ENCODE measurements at regions of chr9 and their contacts with region 1.

Region 1: GRCh38 chr9:14768405-14769229 is 46.1 kb upstream of the CER1 start:
- DNase-seq: no peak
- ATAC-seq: peak; percentile 51

Region 2: GRCh38 chr9:14466429-14466818 is 302.2 kb before region 1 on chr9:
- intact Hi-C with region 1: loop called in 1 of 2 experiments (anchors 10 kb)
- DNase-seq: no peak
- ATAC-seq: no peak

Region 3: DNA sequence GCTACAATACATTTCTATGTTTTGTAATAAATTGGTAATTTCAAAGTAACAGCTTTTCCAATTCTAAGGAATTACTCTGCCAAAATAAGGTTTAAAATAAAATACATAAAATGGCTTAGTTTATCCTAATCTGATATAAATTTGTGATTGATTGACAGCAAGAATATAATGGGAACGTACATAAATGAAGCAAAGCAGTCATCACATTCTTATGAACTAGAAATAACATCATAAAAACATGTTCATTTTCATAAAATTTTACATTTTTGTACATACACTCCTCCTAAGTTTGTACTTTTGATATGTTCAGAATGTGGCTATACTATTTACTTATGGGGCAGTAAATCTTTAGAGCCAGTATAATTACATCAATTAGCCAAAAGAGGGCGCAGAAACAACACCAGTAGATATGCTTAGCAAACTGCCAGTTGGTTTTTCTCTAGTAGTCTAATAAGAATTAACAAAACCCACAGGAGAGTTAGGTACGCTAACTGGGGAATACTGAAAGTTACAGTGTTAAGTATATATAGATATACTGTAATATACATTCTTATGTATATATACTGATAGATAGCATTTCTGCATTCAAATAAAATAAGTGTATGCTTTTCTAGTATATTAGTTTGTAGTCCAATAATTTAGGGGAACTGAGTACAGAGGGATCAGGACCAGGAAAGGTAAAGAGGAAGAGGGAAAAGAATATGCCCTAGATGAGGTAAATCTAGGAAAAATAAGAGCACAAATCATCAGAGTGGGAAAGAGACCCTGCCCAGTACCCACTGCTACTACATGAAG is 152.2 kb before region 1 on chr9:
- intact Hi-C with region 1: loop called in 1 of 2 experiments (anchors 5 kb)
- DNase-seq: no peak
- ATAC-seq: peak; percentile 89

Region 4: DNA sequence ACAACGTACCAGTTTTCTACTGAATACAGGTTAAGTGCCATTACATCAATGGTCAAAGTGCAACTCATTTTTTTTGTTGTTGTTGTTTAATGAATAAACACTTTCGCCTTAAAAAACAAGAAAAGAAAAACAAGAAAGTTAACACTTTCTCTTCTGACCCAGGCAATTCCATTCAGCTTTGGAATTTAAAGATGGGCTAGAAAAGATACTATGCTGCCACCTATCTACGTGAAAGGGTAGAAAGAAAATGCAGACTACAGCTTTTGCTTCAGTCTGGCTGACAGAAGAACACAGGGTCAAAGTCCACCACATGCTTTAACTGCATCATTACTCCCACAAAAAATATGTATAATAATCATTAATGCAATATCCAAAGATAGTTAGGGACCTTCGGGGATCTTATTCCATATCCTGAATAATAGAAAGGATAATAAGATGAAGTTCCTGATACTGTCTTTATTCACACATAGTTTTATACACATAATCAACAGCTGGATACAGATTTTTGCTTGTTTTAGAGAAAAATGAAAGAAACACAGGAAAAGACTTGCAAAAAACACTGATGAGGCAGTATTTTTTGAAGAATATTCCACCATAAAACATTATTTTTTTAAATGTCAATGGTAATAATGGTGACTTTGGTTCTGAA is 115.8 kb before region 1 on chr9:
- intact Hi-C with region 1: no loop called
- DNase-seq: no peak
- ATAC-seq: peak; percentile 90

Region 5: DNA sequence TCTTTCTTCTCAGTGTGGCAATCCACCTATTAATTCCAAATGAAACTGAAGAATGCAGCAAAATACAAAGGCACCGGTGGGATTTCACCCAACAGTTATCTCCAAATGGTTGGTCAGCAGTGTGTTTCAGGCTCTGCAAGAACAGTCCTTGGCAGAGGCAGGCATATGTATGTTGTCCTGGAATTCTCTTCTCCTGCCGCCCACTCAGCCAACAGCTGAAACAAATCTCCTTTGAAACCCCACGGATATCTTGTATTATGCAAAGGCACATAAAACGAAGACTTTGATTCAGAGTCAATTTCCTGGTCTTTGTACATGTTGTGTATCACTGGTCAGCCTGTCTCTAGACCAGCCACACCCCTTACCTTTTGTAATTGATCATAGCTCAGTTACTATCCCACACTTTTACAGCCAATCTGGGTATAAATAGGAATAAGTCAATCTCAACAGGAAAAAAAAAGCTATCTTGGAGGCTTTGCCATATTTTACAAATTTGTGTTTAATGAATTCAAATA is 112.4 kb after region 1 on chr9:
- intact Hi-C with region 1: no loop called
- DNase-seq: peak in 1 of 2 donors; percentile 6
- ATAC-seq: peak; percentile 91

Measured in left colon (tissue), 2 donors.